ENCODE measurements at regions of chr11 and their contacts with region 1.

Region 1: GRCh38 chr11:69704508-69705253 is 859 bp upstream of the FGF19 start:
- DNase-seq: peak; percentile 51
- ATAC-seq: peak; percentile 63
- H3K4me3 Mint-ChIP-seq: no peak overlapping the region
- H3K27ac Mint-ChIP-seq: no peak overlapping the region
- H3K4me1 Mint-ChIP-seq: peaks cover 4% of the 10 kb centered on the region
- H3K27me3 Mint-ChIP-seq: peaks cover 32% of the 10 kb centered on the region

Region 2: GRCh38 chr11:69801519-69802335 is 97.0 kb after region 1 on chr11:
- CTCF ChIA-PET with region 1: interaction called, 4 read pairs
- POLR2A ChIA-PET with region 1: no interaction called
- intact Hi-C with region 1: loop called in 1 of 2 experiments (anchors 10 kb)
- DNase-seq: peak; percentile 60
- ATAC-seq: no peak
- H3K4me3 Mint-ChIP-seq: no peak overlapping the region
- H3K27ac Mint-ChIP-seq: no peak overlapping the region
- H3K4me1 Mint-ChIP-seq: no peaks in the 10 kb centered on the region
- H3K27me3 Mint-ChIP-seq: peaks cover 2% of the 10 kb centered on the region

Region 3: GRCh38 chr11:69817265-69818230 is 112.9 kb after region 1 on chr11:
- CTCF ChIA-PET with region 1: no interaction called
- POLR2A ChIA-PET with region 1: no interaction called
- intact Hi-C with region 1: loop called in 1 of 2 experiments (anchors 5 kb)
- DNase-seq: no peak
- ATAC-seq: no peak
- H3K4me3 Mint-ChIP-seq: no peak overlapping the region
- H3K27ac Mint-ChIP-seq: no peak overlapping the region
- H3K4me1 Mint-ChIP-seq: no peaks in the 10 kb centered on the region
- H3K27me3 Mint-ChIP-seq: peaks cover 36% of the 10 kb centered on the region

Region 4: DNA sequence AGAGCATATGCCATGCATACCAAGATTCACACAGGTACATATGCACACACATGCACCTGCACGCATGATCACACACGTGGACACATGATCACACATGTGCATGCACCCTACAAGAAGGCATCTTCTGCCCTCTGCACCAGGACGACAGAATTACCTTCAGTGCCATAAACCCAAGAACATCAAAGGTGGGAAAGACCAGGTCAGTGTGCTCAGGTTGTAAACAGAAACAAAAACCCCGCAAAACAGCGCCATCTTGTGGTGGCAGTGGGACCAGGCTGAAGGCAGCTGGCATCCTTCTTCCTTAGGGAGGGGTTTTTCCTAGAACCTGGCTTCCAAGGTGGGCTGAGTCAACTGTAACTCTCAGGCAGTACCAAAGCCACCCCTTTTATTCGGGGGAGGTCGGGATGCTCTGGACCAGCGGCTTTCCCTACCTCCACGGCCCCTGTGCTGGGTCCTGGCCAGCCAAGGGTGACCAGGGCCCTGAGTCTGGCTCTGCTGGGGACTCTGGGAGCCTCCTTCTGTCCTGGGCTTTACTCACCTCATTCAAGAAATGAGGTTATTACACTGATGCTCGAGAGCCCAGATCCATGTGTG is 183.9 kb after region 1 on chr11:
- CTCF ChIA-PET with region 1: no interaction called
- POLR2A ChIA-PET with region 1: no interaction called
- intact Hi-C with region 1: loop called (anchors 1 to 5 kb)
- DNase-seq: peak; percentile 80
- ATAC-seq: peak; percentile 64
- H3K4me3 Mint-ChIP-seq: no peak overlapping the region
- H3K27ac Mint-ChIP-seq: no peak overlapping the region
- H3K4me1 Mint-ChIP-seq: peaks cover 2% of the 10 kb centered on the region
- H3K27me3 Mint-ChIP-seq: peaks cover 14% of the 10 kb centered on the region